Heart right ventricle (tissue), 16 donors: ENCODE measurements at regions of chr7 and their contacts with region 1.

Region 1: GRCh38 chr7:45984386-45985295 is 63.6 kb upstream of the IGFBP3 start:
- DNase-seq: no peak
- ATAC-seq: peak in 4 of 8 donors; percentile 46 to 53 (median 50)
- H3K4me3 ChIP-seq: no peak overlapping the region
- H3K27ac ChIP-seq: peak overlapping the region in 1 of 10 donors; percentile 15
- H3K4me1 ChIP-seq: peaks cover 0 to 19% (median 0%) of the 10 kb centered on the region in 9 donors
- H3K27me3 ChIP-seq: no peaks in the 10 kb centered on the region
- CTCF ChIP-seq: peak in 6 of 9 donors; percentile 20 to 40 (median 30)

Region 2: DNA sequence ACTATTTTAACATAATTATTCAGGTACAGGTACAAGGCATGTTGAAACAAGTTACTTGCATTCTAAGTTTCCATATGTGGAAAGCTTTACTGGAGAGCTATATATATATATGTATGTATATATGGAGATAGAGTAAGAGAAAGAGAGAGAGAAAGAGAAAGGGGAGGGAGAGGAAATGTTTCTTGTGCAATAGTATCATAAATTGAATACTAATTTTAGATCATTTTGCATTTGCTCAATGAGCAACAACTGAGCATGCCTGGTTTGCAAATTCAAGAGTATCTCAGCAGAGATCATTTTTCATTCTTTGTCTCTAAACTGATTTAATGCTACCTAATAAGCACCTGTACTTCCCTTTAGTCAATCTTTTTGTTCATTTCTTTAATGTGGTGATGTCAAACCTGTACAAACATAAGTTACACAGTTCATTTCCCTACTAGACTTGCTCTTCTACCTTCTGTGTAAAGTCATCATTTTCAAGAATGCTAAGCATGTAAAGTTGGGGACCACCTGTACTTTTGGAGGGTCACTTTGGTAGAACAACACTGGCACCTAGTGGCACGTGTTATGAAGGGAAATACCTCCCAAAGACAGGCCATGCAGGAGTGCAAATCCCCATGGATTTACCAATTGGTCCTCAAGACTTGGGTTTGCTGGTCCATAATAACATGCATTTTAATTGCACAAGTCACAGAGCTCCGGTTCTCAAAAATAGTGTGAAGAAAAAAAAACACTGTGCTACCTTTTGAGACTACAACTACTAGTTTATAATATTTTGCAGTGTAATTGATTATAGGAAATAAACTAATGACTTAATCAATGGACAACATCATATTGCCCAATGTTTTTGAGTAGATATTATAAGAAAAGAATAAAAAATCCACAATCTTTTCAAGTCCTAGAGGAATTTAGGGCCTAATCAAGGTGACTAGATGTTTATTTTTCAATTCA is 367.6 kb after region 1 on chr7:
- intact Hi-C with region 1: loop called in 1 of 10 experiments (anchors 5 kb)
- DNase-seq: peak in 1 of 2 donors; percentile 53
- ATAC-seq: peak in 6 of 8 donors; percentile 55 to 71 (median 64)
- H3K4me3 ChIP-seq: no peak overlapping the region
- H3K27ac ChIP-seq: no peak overlapping the region
- H3K4me1 ChIP-seq: no peaks in the 10 kb centered on the region
- H3K27me3 ChIP-seq: peaks cover 0 to 6% (median 0%) of the 10 kb centered on the region in 7 donors
- CTCF ChIP-seq: peak; percentile 46 to 81 (median 66)